ENCODE measurements at regions of chr19 and their contacts with region 1.

Region 1: DNA sequence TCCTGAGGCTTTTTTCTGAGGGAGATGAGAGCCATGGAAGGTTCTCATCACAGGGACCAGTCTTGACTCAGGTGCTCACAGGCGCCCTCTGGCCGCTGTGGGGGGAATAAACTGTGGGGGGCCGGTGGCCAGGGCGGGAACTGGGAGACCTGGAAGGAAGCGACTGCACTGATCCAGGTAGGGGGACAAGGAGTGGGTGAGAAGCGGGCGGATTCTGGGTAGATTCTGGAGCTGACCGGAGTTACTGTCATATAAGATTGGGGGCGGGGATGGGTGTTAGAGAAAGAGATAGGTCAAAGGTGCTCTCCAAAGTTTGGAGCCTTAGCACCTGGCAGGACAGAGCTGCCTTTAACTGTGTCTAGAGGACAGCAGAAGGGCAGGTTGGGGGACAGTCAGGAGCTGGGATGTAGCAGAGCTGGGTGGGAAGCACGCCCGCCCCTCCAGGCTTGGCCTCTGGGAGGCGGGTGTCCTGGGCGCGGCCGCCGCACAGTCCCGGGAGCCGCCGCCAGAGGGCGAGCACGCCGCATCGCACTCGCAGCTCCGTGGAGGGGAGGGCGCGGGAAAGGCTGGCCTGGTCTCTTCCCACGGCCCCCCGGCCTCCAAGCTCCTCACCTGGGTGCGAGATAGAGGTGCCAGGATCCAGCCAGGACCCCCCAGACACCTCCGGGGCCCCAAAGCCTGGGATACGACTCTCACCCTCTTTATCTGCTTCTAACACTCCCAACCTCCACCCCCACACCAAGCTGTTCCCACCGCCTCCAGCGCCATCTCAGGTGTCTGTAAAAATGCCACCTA is 4.2 kb upstream of the DAND5 start:
- DNase-seq: peak; percentile 86
- ATAC-seq: peak; percentile 98
- H3K4me3 Mint-ChIP-seq: peak overlapping the region; percentile 91
- H3K27ac Mint-ChIP-seq: peak overlapping the region; percentile 96
- H3K4me1 Mint-ChIP-seq: peaks cover 7% of the 10 kb centered on the region
- H3K27me3 Mint-ChIP-seq: no peaks in the 10 kb centered on the region

Region 2: DNA sequence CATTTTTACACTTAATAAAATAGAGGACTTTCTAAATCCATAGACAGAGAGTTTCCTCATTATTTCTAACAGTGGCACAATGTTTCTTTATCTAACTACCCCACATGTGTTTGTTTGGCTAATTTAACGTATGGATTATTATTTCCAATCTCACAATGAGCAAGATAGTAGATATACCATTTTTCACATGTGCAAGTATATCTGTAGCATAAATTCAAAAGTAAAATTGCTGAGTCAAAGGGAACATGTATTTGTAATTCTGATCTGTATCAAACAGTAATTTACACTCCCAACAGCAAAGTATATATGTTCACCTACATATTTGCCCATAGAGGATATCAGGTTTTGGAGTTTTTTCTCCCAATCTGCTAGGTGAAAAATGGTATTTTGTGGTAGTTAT is 108.6 kb before region 1 on chr19:
- CTCF ChIA-PET with region 1: no interaction called
- POLR2A ChIA-PET with region 1: no interaction called
- DNase-seq: no peak
- ATAC-seq: no peak
- H3K4me3 Mint-ChIP-seq: no peak overlapping the region
- H3K27ac Mint-ChIP-seq: no peak overlapping the region
- H3K4me1 Mint-ChIP-seq: no peaks in the 10 kb centered on the region
- H3K27me3 Mint-ChIP-seq: peaks cover 3% of the 10 kb centered on the region

Region 3: GRCh38 chr19:12881172-12881808 is 83.9 kb before region 1 on chr19 and contains the start of gene DNASE2:
- CTCF ChIA-PET with region 1: interaction called, 121 read pairs
- POLR2A ChIA-PET with region 1: interaction called, 4 read pairs
- DNase-seq: peak; percentile 95
- ATAC-seq: peak; percentile 79
- H3K4me3 Mint-ChIP-seq: peak within 1 kb of the TSS; percentile 81
- H3K27ac Mint-ChIP-seq: peak within 1 kb of the TSS; percentile 87
- H3K4me1 Mint-ChIP-seq: peaks cover 33% of the 10 kb centered on the region
- H3K27me3 Mint-ChIP-seq: no peaks in the 10 kb centered on the region
- total RNA-seq, gene DNASE2: 26.1 to 27.4 TPM

Region 4: DNA sequence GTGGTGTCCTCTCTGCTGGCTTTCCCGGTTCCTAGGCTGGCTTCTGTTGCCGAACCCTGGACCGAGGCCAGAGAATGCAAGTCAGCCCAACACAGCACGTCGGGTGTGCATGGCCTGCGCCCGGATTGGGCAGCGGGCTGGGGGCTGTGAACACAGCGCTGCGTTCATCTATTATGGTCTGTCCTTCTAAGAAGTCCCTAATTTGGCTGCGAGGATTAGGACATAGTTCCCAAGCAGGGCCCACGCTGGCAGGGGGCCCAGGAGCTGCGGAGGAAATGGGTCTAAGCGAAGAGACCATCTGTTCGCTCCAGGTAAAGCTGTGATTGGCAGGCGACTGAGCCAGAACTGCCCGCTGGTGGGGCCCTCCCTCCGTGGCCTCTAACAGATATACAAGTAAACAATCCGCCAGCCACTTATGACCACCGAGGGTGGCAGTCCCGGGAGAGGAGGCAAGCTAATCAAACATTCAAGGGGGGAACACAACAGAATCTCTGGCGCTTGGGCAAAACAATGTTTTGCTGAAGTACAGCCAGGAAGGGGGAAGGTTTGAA is 52.1 kb before region 1 on chr19:
- CTCF ChIA-PET with region 1: interaction called, 12 read pairs
- POLR2A ChIA-PET with region 1: interaction called, 3 read pairs
- DNase-seq: no peak
- ATAC-seq: no peak
- H3K4me3 Mint-ChIP-seq: no peak overlapping the region
- H3K27ac Mint-ChIP-seq: peak overlapping the region; percentile 98
- H3K4me1 Mint-ChIP-seq: peaks cover 31% of the 10 kb centered on the region
- H3K27me3 Mint-ChIP-seq: no peaks in the 10 kb centered on the region

Region 5: GRCh38 chr19:13022859-13023636 is 57.8 kb after region 1 on chr19:
- CTCF ChIA-PET with region 1: interaction called, 10 read pairs
- POLR2A ChIA-PET with region 1: no interaction called
- DNase-seq: no peak
- ATAC-seq: no peak
- H3K4me3 Mint-ChIP-seq: peak overlapping the region; percentile 65
- H3K27ac Mint-ChIP-seq: no peak overlapping the region
- H3K4me1 Mint-ChIP-seq: peaks cover 17% of the 10 kb centered on the region
- H3K27me3 Mint-ChIP-seq: peaks cover 45% of the 10 kb centered on the region

Region 6: GRCh38 chr19:13051267-13052165 is 86.3 kb after region 1 on chr19:
- CTCF ChIA-PET with region 1: interaction called, 10 read pairs
- POLR2A ChIA-PET with region 1: no interaction called
- DNase-seq: no peak
- ATAC-seq: peak; percentile 57
- H3K4me3 Mint-ChIP-seq: no peak overlapping the region
- H3K27ac Mint-ChIP-seq: no peak overlapping the region
- H3K4me1 Mint-ChIP-seq: peaks cover 7% of the 10 kb centered on the region
- H3K27me3 Mint-ChIP-seq: peaks cover 14% of the 10 kb centered on the region

Region 7: GRCh38 chr19:13093407-13094105 is 128.3 kb after region 1 on chr19:
- CTCF ChIA-PET with region 1: interaction called, 56 read pairs
- POLR2A ChIA-PET with region 1: interaction called, 5 read pairs
- DNase-seq: peak; percentile 88
- ATAC-seq: peak; percentile 79
- H3K4me3 Mint-ChIP-seq: no peak overlapping the region
- H3K27ac Mint-ChIP-seq: no peak overlapping the region
- H3K4me1 Mint-ChIP-seq: peaks cover 26% of the 10 kb centered on the region
- H3K27me3 Mint-ChIP-seq: peaks cover 32% of the 10 kb centered on the region